Heart left ventricle (tissue), 16 donors: ENCODE measurements at regions of chr3 and their contacts with region 1.

Region 1: GRCh38 chr3:177359593-177360357 is 162.5 kb upstream of the TBL1XR1 start:
- DNase-seq: peak; percentile 95 to 97 (median 96)
- ATAC-seq: peak; percentile 91 to 94 (median 92)
- H3K4me3 ChIP-seq: peak overlapping the region in 11 of 12 donors; percentile 4 to 57 (median 41)
- H3K27ac ChIP-seq: peak overlapping the region; percentile 73 to 95 (median 91)
- H3K4me1 ChIP-seq: peaks cover 11 to 68% (median 60%) of the 10 kb centered on the region in 12 donors
- H3K27me3 ChIP-seq: no peaks in the 10 kb centered on the region
- CTCF ChIP-seq: peak in 1 of 12 donors; percentile 15
- POLR2A ChIP-seq: no peak

Region 2: GRCh38 chr3:177069514-177070329 is 290.1 kb before region 1 on chr3:
- intact Hi-C with region 1: loop called in 2 of 10 experiments (anchors 5 kb)
- DNase-seq: no peak
- ATAC-seq: no peak
- H3K4me3 ChIP-seq: no peak overlapping the region
- H3K27ac ChIP-seq: no peak overlapping the region
- H3K4me1 ChIP-seq: peaks cover 4 to 56% (median 21%) of the 10 kb centered on the region in 12 donors
- H3K27me3 ChIP-seq: no peaks in the 10 kb centered on the region
- CTCF ChIP-seq: no peak
- POLR2A ChIP-seq: no peak

Region 3: DNA sequence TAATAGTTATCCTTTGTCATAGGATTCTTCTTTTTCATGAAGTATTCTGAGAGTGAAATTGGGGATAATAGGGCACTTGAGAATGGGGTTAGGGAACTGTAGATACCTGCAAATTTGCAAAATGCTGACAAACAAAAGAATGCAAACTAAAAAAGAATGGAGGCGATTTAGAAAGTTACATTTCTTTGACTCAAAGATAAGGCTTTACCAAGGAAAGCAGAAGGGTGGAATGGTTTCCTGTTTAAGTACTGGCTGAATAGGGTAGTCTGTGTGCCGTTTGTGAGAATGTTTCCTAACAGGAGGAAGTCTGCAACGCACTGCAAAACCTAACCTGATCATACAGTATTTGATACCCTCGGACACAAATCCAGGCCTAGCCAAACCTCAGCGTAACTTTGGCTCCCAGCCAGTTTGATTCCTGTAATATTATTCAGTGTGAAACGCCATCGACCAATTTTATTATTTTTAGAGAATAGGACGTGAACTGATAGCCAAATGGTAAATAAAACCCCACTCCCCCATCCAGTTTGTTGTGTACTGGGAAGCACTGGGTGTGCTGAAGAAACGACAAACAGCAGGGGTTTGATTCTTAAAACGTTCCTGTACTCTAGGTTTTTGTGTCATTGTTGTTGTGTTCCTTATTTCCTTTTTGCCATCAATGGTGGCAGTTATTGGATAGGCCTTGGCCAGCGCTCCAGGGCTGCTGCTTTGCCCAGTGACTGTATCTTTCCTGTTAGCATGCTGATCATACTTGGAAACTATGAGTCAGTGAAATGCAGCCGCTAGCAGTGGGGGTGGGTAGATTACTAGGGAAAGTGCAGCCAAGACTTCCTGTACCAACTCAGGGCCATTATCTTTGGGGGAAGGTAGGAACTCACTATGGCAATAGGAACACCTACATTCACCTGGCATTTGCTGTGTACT is 14.5 kb before region 1 on chr3:
- intact Hi-C with region 1: loop called in 1 of 10 experiments (anchors 1 kb)
- DNase-seq: peak; percentile 88 to 94 (median 88)
- ATAC-seq: peak; percentile 97 to 99 (median 98)
- H3K4me3 ChIP-seq: peak overlapping the region in 1 of 12 donors; percentile 9
- H3K27ac ChIP-seq: peak overlapping the region; percentile 79 to 98 (median 92)
- H3K4me1 ChIP-seq: peaks cover 16 to 68% (median 47%) of the 10 kb centered on the region in 12 donors
- H3K27me3 ChIP-seq: no peaks in the 10 kb centered on the region
- CTCF ChIP-seq: no peak
- POLR2A ChIP-seq: no peak

Region 4: GRCh38 chr3:177516158-177517011 is 156.6 kb after region 1 on chr3:
- intact Hi-C with region 1: loop called in 1 of 10 experiments (anchors 10 kb)
- DNase-seq: peak in 4 of 5 donors; percentile 48 to 75 (median 64)
- ATAC-seq: peak; percentile 81 to 95 (median 88)
- H3K4me3 ChIP-seq: no peak overlapping the region
- H3K27ac ChIP-seq: peak overlapping the region; percentile 9 to 78 (median 68)
- H3K4me1 ChIP-seq: peaks cover 4 to 47% (median 35%) of the 10 kb centered on the region in 12 donors
- H3K27me3 ChIP-seq: no peaks in the 10 kb centered on the region
- CTCF ChIP-seq: no peak
- POLR2A ChIP-seq: no peak

Region 5: GRCh38 chr3:177694316-177694715 is 334.5 kb after region 1 on chr3:
- intact Hi-C with region 1: no loop called
- DNase-seq: no peak
- ATAC-seq: peak in 2 of 4 donors; percentile 42 to 54
- H3K4me3 ChIP-seq: no peak overlapping the region
- H3K27ac ChIP-seq: peak overlapping the region in 3 of 12 donors; percentile 2 to 33 (median 22)
- H3K4me1 ChIP-seq: peaks cover 0 to 16% (median 7%) of the 10 kb centered on the region in 12 donors
- H3K27me3 ChIP-seq: no peaks in the 10 kb centered on the region
- CTCF ChIP-seq: no peak
- POLR2A ChIP-seq: no peak

Region 6: GRCh38 chr3:177724020-177724638 is 364.4 kb after region 1 on chr3:
- intact Hi-C with region 1: loop called in 1 of 10 experiments (anchors 1 kb)
- DNase-seq: peak; percentile 66 to 91 (median 72)
- ATAC-seq: peak; percentile 91 to 98 (median 96)
- H3K4me3 ChIP-seq: no peak overlapping the region
- H3K27ac ChIP-seq: peak overlapping the region; percentile 28 to 80 (median 72)
- H3K4me1 ChIP-seq: peaks cover 0 to 54% (median 30%) of the 10 kb centered on the region in 12 donors
- H3K27me3 ChIP-seq: no peaks in the 10 kb centered on the region
- CTCF ChIP-seq: no peak
- POLR2A ChIP-seq: no peak

Region 7: DNA sequence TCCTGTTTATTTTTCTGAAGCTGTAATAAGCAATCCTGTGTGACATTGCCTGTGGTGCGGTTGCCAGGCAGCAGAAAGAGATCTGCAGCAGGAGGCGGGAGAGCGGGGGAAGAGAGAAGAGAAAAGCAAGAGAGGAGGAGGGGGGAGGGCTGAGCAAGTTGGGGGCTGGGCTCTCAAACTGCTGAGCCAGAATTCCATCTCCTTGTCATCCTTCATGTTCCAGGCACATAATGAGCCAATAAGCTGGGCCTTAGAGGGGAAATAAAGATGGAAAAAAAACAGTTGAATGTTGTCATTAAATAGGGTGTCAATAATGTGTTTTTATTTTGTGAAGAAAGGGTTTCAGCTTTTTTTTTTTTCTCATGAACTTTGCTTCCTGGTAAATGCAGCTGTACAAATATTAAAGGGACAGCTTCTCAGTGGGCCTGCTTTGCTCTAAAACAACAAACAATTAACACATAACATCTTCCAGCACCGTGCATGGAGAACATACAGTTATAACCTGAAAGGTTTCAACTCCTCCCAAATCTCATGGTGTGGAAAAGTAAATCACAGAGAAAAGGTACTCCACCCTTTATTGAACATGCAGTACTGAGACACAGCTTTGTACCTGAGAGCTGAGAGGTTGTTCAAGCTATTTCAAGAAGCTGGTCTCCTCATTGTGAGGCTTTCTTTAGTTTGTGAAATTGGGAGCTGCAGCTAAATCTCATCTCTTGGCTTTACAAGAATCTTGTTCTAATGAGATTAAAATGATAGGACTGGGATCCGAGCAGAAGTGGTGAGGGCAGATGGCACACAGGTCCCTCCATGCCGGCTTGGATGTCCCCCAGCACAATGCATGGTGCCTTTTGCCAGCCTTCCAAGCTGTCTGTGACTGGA is 725.4 kb after region 1 on chr3:
- intact Hi-C with region 1: loop called in 1 of 10 experiments (anchors 10 kb)
- DNase-seq: peak; percentile 84 to 91 (median 86)
- ATAC-seq: peak; percentile 92 to 98 (median 95)
- H3K4me3 ChIP-seq: no peak overlapping the region
- H3K27ac ChIP-seq: peak overlapping the region in 11 of 12 donors; percentile 39 to 90 (median 77)
- H3K4me1 ChIP-seq: peaks cover 7 to 49% (median 34%) of the 10 kb centered on the region in 12 donors
- H3K27me3 ChIP-seq: no peaks in the 10 kb centered on the region
- CTCF ChIP-seq: no peak
- POLR2A ChIP-seq: no peak